Ascending aorta (tissue), 2 donors: ENCODE measurements at regions of chr16 and their contacts with region 1.

Region 1: DNA sequence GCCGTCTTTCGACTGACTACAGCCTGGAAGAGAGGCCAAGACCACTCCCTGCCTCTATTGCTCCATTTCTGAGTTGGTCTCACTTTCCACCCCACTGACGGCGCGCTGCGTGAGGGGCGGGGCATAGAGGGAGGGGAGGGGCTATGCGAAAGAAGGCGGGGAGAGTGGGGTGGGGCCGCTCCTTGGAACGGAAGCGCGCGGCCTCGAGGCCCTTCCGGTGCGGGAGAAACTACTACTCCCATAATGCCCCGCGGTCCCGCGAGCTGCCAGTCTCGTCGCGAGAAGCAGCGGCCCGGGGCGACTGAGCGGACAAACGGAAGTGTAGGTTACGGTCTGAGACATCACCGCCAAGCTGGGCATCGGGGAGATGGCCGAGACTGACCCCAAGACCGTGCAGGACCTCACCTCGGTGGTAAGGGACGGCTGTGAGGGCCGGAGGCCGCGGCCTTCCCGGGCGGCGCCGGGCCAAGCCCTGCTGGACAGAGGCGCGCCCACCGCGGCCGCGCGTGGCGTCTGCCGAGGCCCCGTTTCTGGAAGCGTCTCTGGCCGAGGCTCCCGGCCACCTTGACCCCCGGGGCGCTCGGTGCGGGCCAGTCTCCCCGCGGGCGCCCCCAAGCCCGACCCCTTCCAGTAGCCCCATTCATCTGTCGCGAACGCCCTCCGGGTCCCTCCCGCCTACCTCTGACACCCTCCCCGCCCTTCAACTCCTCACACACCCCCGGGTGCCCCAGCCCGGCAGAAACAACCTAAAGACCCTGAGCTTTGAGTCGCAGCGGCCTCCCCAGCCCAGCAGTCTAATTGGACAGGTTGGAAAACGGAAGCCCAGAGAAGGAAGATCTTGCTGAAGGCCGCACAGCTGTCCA is at the start of gene HSBP1:
- DNase-seq: peak; percentile 75 to 96
- H3K4me3 ChIP-seq: peak within 1 kb of the TSS; percentile 82 to 83
- H3K27ac ChIP-seq: peak within 1 kb of the TSS; percentile 66 to 68
- H3K4me1 ChIP-seq: peaks cover 10 to 32% of the 10 kb centered on the region in 2 donors
- H3K27me3 ChIP-seq: no peaks in the 10 kb centered on the region
- CTCF ChIP-seq: peak in 1 of 3 experiments; percentile 6
- total RNA-seq, gene HSBP1: 13.5 TPM

Region 2: GRCh38 chr16:83689385-83689831 is 118.5 kb before region 1 on chr16:
- intact Hi-C with region 1: loop called (anchors 5 kb)
- DNase-seq: peak in 1 of 2 donors; percentile 75
- H3K4me3 ChIP-seq: no peak overlapping the region
- H3K27ac ChIP-seq: peak overlapping the region; percentile 48 to 81
- H3K4me1 ChIP-seq: peaks cover 0 to 40% of the 10 kb centered on the region in 2 donors
- H3K27me3 ChIP-seq: no peaks in the 10 kb centered on the region
- CTCF ChIP-seq: no peak

Region 3: GRCh38 chr16:83717814-83718213 is 90.1 kb before region 1 on chr16:
- intact Hi-C with region 1: loop called (anchors 1 kb)
- DNase-seq: no peak
- H3K4me3 ChIP-seq: no peak overlapping the region
- H3K27ac ChIP-seq: no peak overlapping the region
- H3K4me1 ChIP-seq: peaks cover 0 to 14% of the 10 kb centered on the region in 2 donors
- H3K27me3 ChIP-seq: no peaks in the 10 kb centered on the region
- CTCF ChIP-seq: no peak

Region 4: GRCh38 chr16:83898463-83899271 is 90.7 kb after region 1 on chr16 and contains the start of gene MLYCD:
- intact Hi-C with region 1: loop called (anchors 5 kb)
- DNase-seq: peak; percentile 50 to 90
- H3K4me3 ChIP-seq: peak within 1 kb of the TSS; percentile 95 to 97
- H3K27ac ChIP-seq: peak within 1 kb of the TSS; percentile 94 to 98
- H3K4me1 ChIP-seq: peaks cover 3 to 13% of the 10 kb centered on the region in 2 donors
- H3K27me3 ChIP-seq: no peaks in the 10 kb centered on the region
- CTCF ChIP-seq: peak in 1 of 3 experiments; percentile 4
- total RNA-seq, gene MLYCD: 13.4 TPM